GM12878 (cell line): ENCODE measurements at regions of chr6 and their contacts with region 1.

Region 1: DNA sequence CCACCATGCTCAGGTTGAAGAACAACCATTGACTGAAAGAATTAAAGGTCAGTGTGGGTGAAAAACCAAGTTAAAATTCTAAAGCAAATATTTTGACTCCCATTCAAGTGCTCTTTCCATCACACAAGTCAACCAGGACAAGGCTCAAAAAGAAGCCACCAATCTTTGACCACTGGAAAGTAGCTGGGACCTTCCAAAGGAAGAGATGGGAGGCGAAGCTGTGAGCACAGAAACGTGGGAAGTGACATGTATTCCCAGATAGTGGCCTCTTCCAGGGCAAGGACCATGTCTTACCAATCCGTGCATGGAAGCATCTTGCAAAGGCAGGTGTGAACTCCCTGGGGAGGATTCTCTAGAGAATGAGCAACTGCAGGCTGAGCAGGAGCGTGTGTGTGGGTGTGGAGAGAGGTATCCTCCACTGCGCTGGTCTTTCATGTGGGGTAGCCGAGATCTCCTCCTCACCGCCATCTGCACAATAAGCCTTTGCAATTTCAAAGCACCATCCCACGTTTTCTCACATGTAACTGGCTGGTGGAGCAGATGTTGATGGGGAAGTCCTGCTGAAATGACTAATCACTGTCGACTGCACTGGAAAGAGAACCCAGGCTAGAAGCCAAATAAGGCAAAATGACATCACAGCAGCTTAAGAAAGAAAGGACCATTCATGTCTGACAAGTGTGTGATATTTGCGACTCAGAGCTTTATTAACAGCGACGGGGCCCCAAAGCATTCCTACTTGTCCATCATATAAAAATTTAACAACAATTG is 189.4 kb upstream of the RREB1 start:
- DNase-seq: peak; percentile 91
- ATAC-seq: peak; percentile 96
- H3K4me3 ChIP-seq: no peak overlapping the region
- H3K27ac ChIP-seq: peak overlapping the region; percentile 30; the same call in 1 of the 2 replicates
- H3K4me1 ChIP-seq: peaks cover 27% of the 10 kb centered on the region
- H3K27me3 ChIP-seq: no peaks in the 10 kb centered on the region
- CTCF ChIP-seq: no peak
- EP300 ChIP-seq: peak; percentile 99
- POLR2A ChIP-seq: no peak
- RAD21 ChIP-seq: peak; percentile 31; the same call in 1 of the 2 replicates

Region 2: DNA sequence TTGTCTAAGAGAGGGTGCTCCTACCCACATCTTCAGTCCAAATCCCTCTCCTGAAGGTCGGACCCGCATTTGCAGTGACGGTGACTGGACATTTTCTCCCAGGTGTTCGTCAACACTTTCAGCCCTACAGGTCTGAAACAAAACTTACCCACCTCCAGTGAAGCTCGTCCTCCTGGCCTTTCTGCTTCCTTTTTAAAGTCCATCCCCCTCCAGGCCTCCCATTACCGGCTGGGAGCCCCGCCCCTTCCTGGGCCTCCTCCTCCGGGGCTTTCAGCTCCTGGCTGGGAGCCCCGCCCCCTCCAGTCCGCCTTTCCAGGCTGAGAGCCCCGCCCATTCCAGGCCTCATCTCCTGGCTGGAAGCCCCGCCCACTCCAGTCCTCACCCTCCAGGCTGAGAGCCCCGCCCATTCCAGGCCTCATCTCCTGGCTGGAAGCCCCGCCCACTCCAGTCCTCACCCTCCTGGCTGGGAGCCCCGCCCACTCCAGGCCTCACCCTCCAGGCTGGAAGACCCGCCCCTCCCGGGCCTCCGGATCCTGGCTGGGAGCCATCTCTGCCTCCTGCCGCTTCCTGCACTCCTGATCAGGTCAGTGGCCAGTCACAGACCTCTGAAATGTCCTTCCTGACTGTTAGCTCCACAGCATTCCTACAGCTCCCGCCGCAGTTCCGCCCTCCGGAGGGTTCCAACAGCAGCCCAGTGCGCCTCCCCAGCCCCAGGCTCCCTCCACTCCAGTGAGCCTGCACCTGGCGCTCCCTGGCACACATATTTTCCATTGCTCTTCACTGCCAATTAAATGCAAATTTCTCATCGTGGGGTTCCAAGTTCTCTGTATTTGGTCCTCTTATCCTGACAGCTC is 231.4 kb before region 1 on chr6:
- CTCF ChIA-PET with region 1: no interaction called
- POLR2A ChIA-PET with region 1: no interaction called
- RAD21 ChIA-PET with region 1: no interaction called
- SMC1A ChIA-PET with region 1: interaction called, 7 read pairs
- in situ Hi-C with region 1: no loop called
- intact Hi-C with region 1: loop called (anchors 1 kb)
- DNase-seq: no peak
- ATAC-seq: no peak
- H3K4me3 ChIP-seq: no peak overlapping the region
- H3K27ac ChIP-seq: no peak overlapping the region
- H3K4me1 ChIP-seq: peaks cover 38% of the 10 kb centered on the region
- H3K27me3 ChIP-seq: no peaks in the 10 kb centered on the region
- CTCF ChIP-seq: no peak
- EP300 ChIP-seq: no peak
- POLR2A ChIP-seq: no peak
- RAD21 ChIP-seq: no peak

Region 3: GRCh38 chr6:6758915-6759654 is 159.3 kb before region 1 on chr6:
- CTCF ChIA-PET with region 1: interaction called, 18 read pairs
- POLR2A ChIA-PET with region 1: no interaction called
- RAD21 ChIA-PET with region 1: interaction called, 7 read pairs
- SMC1A ChIA-PET with region 1: interaction called, 5 read pairs
- in situ Hi-C with region 1: no loop called
- intact Hi-C with region 1: no loop called
- DNase-seq: peak; percentile 13
- ATAC-seq: peak; percentile 97
- H3K4me3 ChIP-seq: no peak overlapping the region
- H3K27ac ChIP-seq: no peak overlapping the region
- H3K4me1 ChIP-seq: peaks cover 7% of the 10 kb centered on the region
- H3K27me3 ChIP-seq: no peaks in the 10 kb centered on the region
- CTCF ChIP-seq: peak; percentile 55 to 65 (median 57)
- EP300 ChIP-seq: 0 out of 4 replicates have a peak, but pooled peaks of 1 of the 2 experiments have one; percentile 29
- POLR2A ChIP-seq: no peak
- RAD21 ChIP-seq: peak; percentile 70

Region 4: GRCh38 chr6:6793388-6794250 is 124.8 kb before region 1 on chr6:
- CTCF ChIA-PET with region 1: interaction called, 5 read pairs
- POLR2A ChIA-PET with region 1: no interaction called
- RAD21 ChIA-PET with region 1: interaction called, 9 read pairs
- SMC1A ChIA-PET with region 1: interaction called, 13 read pairs
- in situ Hi-C with region 1: no loop called
- intact Hi-C with region 1: loop called (anchors 5 kb)
- DNase-seq: no peak
- ATAC-seq: no peak
- H3K4me3 ChIP-seq: no peak overlapping the region
- H3K27ac ChIP-seq: no peak overlapping the region
- H3K4me1 ChIP-seq: peaks cover 28% of the 10 kb centered on the region
- H3K27me3 ChIP-seq: no peaks in the 10 kb centered on the region
- CTCF ChIP-seq: no peak
- EP300 ChIP-seq: no peak
- POLR2A ChIP-seq: no peak
- RAD21 ChIP-seq: no peak

Region 5: GRCh38 chr6:6816716-6817115 is 101.7 kb before region 1 on chr6:
- CTCF ChIA-PET with region 1: no interaction called
- POLR2A ChIA-PET with region 1: no interaction called
- RAD21 ChIA-PET with region 1: interaction called, 3 read pairs
- SMC1A ChIA-PET with region 1: no interaction called
- in situ Hi-C with region 1: no loop called
- intact Hi-C with region 1: loop called (anchors 5 kb)
- DNase-seq: no peak
- ATAC-seq: peak; percentile 73
- H3K4me3 ChIP-seq: no peak overlapping the region
- H3K27ac ChIP-seq: peak overlapping the region; percentile 62
- H3K4me1 ChIP-seq: peaks cover 21% of the 10 kb centered on the region
- H3K27me3 ChIP-seq: no peaks in the 10 kb centered on the region
- CTCF ChIP-seq: no peak
- EP300 ChIP-seq: no peak
- POLR2A ChIP-seq: no peak
- RAD21 ChIP-seq: no peak

Region 6: GRCh38 chr6:7035837-7036249 is 117.4 kb after region 1 on chr6:
- CTCF ChIA-PET with region 1: no interaction called
- POLR2A ChIA-PET with region 1: no interaction called
- RAD21 ChIA-PET with region 1: no interaction called
- SMC1A ChIA-PET with region 1: no interaction called
- in situ Hi-C with region 1: no loop called
- intact Hi-C with region 1: no loop called
- DNase-seq: no peak
- ATAC-seq: no peak
- H3K4me3 ChIP-seq: no peak overlapping the region
- H3K27ac ChIP-seq: no peak overlapping the region
- H3K4me1 ChIP-seq: no peaks in the 10 kb centered on the region
- H3K27me3 ChIP-seq: no peaks in the 10 kb centered on the region; a peak in 1 of 4 replicates
- CTCF ChIP-seq: no peak
- EP300 ChIP-seq: no peak
- POLR2A ChIP-seq: no peak
- RAD21 ChIP-seq: no peak